ENCODE measurements at regions of chr16 and their contacts with region 1.

Region 1: DNA sequence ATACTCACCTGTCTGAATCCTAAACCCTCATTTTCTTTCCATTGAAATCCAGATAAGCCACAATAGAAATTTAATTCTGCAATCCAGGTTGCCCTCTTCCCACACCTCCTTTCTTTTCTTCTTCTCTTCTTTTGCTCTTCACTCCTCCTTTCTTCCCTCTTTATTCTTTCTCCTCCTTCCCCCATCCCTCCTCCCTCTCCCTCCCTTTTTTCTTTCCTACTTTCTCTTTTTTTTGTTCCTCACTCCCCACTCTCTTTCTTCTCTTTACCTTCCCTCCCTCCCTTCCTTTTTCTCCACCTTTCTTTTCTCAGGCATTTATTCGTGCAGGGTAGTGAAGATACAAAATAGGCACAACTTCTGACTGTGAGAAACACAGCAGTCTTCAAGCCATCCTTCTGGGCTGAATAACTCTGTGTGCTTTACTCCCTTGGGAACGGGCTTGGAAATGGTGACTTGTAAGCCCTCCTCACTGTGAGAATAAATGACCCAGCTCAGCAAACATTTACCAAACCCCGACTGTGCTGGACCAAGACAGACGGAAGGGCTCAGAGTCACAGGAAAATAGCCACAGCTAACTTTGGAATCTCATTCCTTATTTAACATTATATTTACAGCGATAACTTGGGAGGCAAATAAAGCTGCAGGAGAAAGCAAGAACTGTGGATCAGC is 140.8 kb downstream of the HAPSTR1 start:
- DNase-seq: no peak
- H3K4me3 ChIP-seq: no peak overlapping the region
- H3K27ac ChIP-seq: no peak overlapping the region
- H3K4me1 ChIP-seq: no peaks in the 10 kb centered on the region
- H3K27me3 ChIP-seq: no peaks in the 10 kb centered on the region
- CTCF ChIP-seq: no peak
- EP300 ChIP-seq: no peak
- POLR2A ChIP-seq: no peak

Region 2: GRCh38 chr16:8963825-8964441 is 268.3 kb before region 1 on chr16 and contains the start of gene USP7:
- intact Hi-C with region 1: loop called in 1 of 4 experiments (anchors 5 kb)
- DNase-seq: peak; percentile 89 to 95 (median 90)
- H3K4me3 ChIP-seq: peak within 1 kb of the TSS; percentile 67
- H3K27ac ChIP-seq: peak within 1 kb of the TSS; percentile 63 to 70
- H3K4me1 ChIP-seq: peaks cover 14% of the 10 kb centered on the region
- H3K27me3 ChIP-seq: no peaks in the 10 kb centered on the region
- CTCF ChIP-seq: no peak
- EP300 ChIP-seq: no peak
- POLR2A ChIP-seq: peak; percentile 48
- total RNA-seq, gene USP7: 73.8 to 104 (median 98.3) TPM

Region 3: DNA sequence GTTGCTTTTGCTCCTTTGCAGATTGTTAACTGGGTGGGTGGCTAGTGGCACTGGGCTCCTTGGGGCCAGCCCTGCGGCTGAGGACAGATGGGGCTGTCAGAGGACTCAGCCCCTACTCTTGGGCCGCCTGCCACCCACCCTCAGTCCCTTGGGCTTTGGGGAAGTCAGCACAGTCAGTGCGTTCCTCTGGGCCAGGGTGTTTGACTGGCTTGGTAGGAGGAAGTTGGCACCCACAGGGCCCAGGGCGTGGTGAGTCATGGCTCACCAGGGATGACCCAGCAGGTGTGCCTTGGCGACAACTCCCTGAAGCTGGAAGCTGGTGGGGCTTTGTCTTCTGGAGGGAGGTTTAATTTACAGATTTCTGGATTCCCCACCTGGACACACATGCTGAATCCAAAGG is 108.4 kb before region 1 on chr16:
- intact Hi-C with region 1: no loop called
- DNase-seq: no peak
- H3K4me3 ChIP-seq: no peak overlapping the region
- H3K27ac ChIP-seq: no peak overlapping the region
- H3K4me1 ChIP-seq: no peaks in the 10 kb centered on the region
- H3K27me3 ChIP-seq: no peaks in the 10 kb centered on the region
- CTCF ChIP-seq: no peak
- EP300 ChIP-seq: no peak
- POLR2A ChIP-seq: no peak